Naive thymus-derived CD4-positive, alpha-beta T cell (primary cell): ENCODE measurements at regions of chr13 and their contacts with region 1.

Region 1: DNA sequence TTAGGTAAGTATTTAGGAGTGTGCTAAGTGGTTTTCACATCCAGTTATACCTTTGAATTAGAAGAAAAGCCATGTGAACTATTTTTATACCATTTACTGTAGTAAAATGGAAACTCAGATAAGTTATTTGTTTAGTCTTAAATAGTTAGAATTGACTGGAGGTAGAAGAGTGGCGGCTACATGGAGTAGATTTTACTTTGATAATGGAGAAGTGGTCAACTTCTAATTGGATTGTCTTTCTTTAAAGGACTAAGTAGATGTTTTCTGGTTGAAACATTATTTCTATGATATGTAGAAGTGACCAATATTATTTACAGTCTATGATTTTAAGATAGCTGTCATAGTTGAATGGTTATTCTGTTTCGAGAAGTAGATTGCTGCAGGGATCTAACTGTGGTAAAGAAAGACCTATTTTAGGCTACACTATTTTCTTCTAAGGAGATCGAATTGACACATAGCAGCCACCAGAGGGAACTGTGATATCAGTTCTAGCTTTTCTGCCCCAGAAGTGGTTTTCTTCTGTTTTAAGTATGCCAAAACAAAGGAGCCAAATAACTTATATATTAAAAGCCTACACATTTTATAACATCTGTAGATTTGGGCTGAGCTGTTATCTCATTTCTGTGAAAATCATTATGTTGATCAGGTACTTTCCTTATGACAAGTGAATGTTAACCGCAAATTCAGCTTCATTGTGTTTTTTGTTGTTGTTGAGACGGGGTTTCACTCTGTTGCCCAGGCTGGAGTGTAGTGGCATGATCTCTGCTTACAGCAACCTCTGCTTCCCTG is 26.1 kb downstream of the ZMYM2 start:
- DNase-seq: peak in 3 of 9 donors; percentile 4 to 22 (median 11)
- ATAC-seq: peak; percentile 72
- H3K4me3 ChIP-seq: no peak overlapping the region
- H3K4me3 Mint-ChIP-seq: no peak overlapping the region
- H3K27ac ChIP-seq: no peak overlapping the region
- H3K27ac Mint-ChIP-seq: peak overlapping the region in 2 of 9 donors; percentile 3 to 72
- H3K4me1 ChIP-seq: peaks cover 8 to 21% of the 10 kb centered on the region in 2 donors
- H3K4me1 Mint-ChIP-seq: peaks cover 21 to 67% (median 52%) of the 10 kb centered on the region in 7 donors
- H3K27me3 ChIP-seq: no peaks in the 10 kb centered on the region
- H3K27me3 Mint-ChIP-seq: no peaks in the 10 kb centered on the region

Region 2: DNA sequence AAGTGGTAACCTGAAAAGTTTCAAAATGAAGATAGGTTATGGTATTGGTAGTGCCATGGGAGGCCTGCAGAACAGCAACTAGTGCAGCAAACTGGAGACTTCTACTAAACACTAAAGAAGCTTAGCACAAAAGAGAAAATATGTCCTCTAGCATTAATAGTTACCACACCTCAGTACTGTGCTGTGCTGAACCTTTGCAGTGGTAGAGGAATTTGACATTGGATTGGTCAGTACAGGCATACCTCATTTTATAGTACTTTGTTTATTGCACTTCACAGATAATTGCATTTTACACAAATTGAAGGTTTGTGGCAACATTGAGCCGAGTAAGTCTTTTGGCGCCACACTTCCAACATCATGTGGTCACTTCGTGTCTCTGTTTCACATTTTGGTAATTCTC is 14.3 kb after region 1 on chr13:
- CTCF ChIA-PET with region 1: no interaction called
- POLR2A ChIA-PET with region 1: no interaction called
- intact Hi-C with region 1: loop called in 1 of 2 experiments (anchors 2 kb)
- DNase-seq: no peak
- ATAC-seq: no peak
- H3K4me3 ChIP-seq: no peak overlapping the region
- H3K4me3 Mint-ChIP-seq: peak overlapping the region in 1 of 10 donors; percentile 27
- H3K27ac ChIP-seq: no peak overlapping the region
- H3K27ac Mint-ChIP-seq: peak overlapping the region in 4 of 9 donors; percentile 30 to 43 (median 39)
- H3K4me1 ChIP-seq: no peaks in the 10 kb centered on the region
- H3K4me1 Mint-ChIP-seq: peaks cover 27 to 76% (median 71%) of the 10 kb centered on the region in 7 donors
- H3K27me3 ChIP-seq: no peaks in the 10 kb centered on the region
- H3K27me3 Mint-ChIP-seq: no peaks in the 10 kb centered on the region

Region 3: DNA sequence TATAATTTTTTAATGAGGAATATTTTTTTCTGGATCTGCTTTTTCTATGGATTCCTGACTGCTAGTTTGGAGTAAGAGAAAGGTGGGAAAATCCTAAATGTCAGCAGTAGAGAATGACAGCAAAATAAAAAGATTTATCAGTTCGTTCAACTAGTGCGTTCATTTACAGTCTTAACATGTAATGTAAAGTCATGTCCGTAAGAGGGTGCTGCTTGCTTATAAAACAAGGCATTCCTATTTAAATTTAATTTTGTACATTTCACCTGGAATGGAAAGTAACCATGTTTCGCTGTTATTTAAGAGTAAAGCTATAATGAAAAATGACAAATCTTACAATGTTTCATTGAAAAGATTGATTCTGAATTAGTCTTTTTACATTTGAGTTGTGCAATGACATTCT is 50.5 kb after region 1 on chr13:
- CTCF ChIA-PET with region 1: no interaction called
- POLR2A ChIA-PET with region 1: no interaction called
- intact Hi-C with region 1: loop called in 1 of 2 experiments (anchors 5 kb)
- DNase-seq: no peak
- ATAC-seq: no peak
- H3K4me3 ChIP-seq: no peak overlapping the region
- H3K4me3 Mint-ChIP-seq: no peak overlapping the region
- H3K27ac ChIP-seq: no peak overlapping the region
- H3K27ac Mint-ChIP-seq: peak overlapping the region in 3 of 9 donors; percentile 33 to 60 (median 46)
- H3K4me1 ChIP-seq: no peaks in the 10 kb centered on the region
- H3K4me1 Mint-ChIP-seq: peaks cover 5 to 49% (median 33%) of the 10 kb centered on the region in 7 donors
- H3K27me3 ChIP-seq: no peaks in the 10 kb centered on the region
- H3K27me3 Mint-ChIP-seq: no peaks in the 10 kb centered on the region